Thyroid gland (tissue), 4 donors: ENCODE measurements at regions of chr1 and their contacts with region 1.

Region 1: DNA sequence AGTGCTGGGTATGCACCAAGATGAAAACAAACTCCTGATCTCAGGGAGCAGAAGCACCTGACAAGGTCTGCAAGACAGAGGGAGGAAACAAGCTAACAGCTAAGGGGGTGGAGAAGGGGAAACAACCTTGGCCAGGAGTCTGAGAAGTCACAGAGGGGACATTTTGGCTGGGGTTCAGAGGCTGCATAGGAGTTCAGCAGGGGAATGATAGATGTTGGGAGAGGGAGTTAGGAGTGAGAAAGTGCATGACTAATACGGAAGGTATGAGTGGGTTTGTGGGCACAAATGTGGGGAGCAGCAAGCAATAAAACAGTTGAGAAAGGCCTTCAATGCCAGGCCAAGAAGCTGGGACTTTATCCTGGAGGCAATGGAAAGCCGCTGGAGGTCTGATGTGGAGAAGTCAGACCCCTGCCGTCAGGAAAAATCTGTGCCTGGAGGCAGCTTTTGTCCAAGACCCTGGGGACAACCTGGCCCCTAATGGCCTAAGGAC is 16.4 kb downstream of the EPHA2 start:
- DNase-seq: no peak
- H3K4me3 ChIP-seq: no peak overlapping the region
- H3K27ac ChIP-seq: peak overlapping the region in 2 of 3 donors; percentile 66 to 67
- H3K4me1 ChIP-seq: peaks cover 42 to 53% of the 10 kb centered on the region in 2 donors
- H3K27me3 ChIP-seq: no peaks in the 10 kb centered on the region
- CTCF ChIP-seq: no peak
- POLR2A ChIP-seq: no peak

Region 2: GRCh38 chr1:16175610-16176553 is 36.4 kb after region 1 on chr1:
- intact Hi-C with region 1: loop called (anchors 5 kb)
- DNase-seq: peak; percentile 97
- H3K4me3 ChIP-seq: no peak overlapping the region
- H3K27ac ChIP-seq: peak overlapping the region; percentile 93 to 97 (median 96)
- H3K4me1 ChIP-seq: peaks cover 28 to 53% of the 10 kb centered on the region in 2 donors
- H3K27me3 ChIP-seq: no peaks in the 10 kb centered on the region
- CTCF ChIP-seq: no peak
- POLR2A ChIP-seq: peak in 1 of 2 donors; percentile 38